ENCODE measurements at regions of chr12 and their contacts with region 1.

Region 1: GRCh38 chr12:44574586-44574985 is 301.5 kb downstream of the NELL2 start:
- DNase-seq: no peak
- ATAC-seq: no peak
- H3K4me3 ChIP-seq: no peak overlapping the region
- H3K27ac ChIP-seq: no peak overlapping the region
- H3K4me1 ChIP-seq: no peaks in the 10 kb centered on the region
- H3K27me3 ChIP-seq: no peaks in the 10 kb centered on the region
- CTCF ChIP-seq: no peak

Region 2: DNA sequence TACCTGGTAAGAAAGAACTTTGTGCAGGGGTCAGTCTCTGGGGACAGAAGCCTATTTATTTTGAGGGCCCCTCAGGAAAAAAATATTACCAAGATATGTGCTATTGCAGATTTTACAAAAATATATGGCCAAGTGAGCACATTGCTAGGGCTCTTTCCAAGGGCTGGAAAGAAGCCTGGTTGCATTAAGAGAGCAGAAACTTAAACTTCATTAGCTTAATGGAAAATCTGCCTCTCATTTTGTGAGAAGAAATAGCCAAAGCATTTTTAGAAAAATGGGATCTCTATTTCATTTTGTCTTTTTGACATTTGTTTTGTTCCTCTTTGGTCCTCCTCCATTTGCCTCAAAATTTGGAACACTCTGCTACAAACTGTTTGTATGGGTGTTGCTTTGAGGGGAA is 18.0 kb after region 1 on chr12:
- intact Hi-C with region 1: loop called in 1 of 10 experiments (anchors 1 kb)
- DNase-seq: no peak
- ATAC-seq: no peak
- H3K4me3 ChIP-seq: no peak overlapping the region
- H3K27ac ChIP-seq: no peak overlapping the region
- H3K4me1 ChIP-seq: no peaks in the 10 kb centered on the region
- H3K27me3 ChIP-seq: no peaks in the 10 kb centered on the region
- CTCF ChIP-seq: no peak

Measured in heart right ventricle (tissue), 16 donors.